Prostate gland (tissue), 2 donors: ENCODE measurements at regions of chr14 and their contacts with region 1.

Region 1: GRCh38 chr14:75293920-75294642 is 15.5 kb downstream of the FOS start:
- DNase-seq: peak; percentile 93
- H3K4me3 ChIP-seq: peak overlapping the region; percentile 37 to 53
- H3K27ac ChIP-seq: peak overlapping the region; percentile 79 to 86
- H3K4me1 ChIP-seq: peaks cover 6% of the 10 kb centered on the region
- H3K27me3 ChIP-seq: no peaks in the 10 kb centered on the region
- CTCF ChIP-seq: peak in 1 of 4 experiments; percentile 27
- POLR2A ChIP-seq: no peak

Region 2: GRCh38 chr14:75182841-75183624 is 111.0 kb before region 1 on chr14:
- intact Hi-C with region 1: loop called (anchors 5 kb)
- DNase-seq: no peak
- H3K4me3 ChIP-seq: no peak overlapping the region
- H3K27ac ChIP-seq: peak overlapping the region in 1 of 2 donors; percentile 13
- H3K4me1 ChIP-seq: no peaks in the 10 kb centered on the region
- H3K27me3 ChIP-seq: no peaks in the 10 kb centered on the region
- CTCF ChIP-seq: no peak
- POLR2A ChIP-seq: no peak

Region 3: DNA sequence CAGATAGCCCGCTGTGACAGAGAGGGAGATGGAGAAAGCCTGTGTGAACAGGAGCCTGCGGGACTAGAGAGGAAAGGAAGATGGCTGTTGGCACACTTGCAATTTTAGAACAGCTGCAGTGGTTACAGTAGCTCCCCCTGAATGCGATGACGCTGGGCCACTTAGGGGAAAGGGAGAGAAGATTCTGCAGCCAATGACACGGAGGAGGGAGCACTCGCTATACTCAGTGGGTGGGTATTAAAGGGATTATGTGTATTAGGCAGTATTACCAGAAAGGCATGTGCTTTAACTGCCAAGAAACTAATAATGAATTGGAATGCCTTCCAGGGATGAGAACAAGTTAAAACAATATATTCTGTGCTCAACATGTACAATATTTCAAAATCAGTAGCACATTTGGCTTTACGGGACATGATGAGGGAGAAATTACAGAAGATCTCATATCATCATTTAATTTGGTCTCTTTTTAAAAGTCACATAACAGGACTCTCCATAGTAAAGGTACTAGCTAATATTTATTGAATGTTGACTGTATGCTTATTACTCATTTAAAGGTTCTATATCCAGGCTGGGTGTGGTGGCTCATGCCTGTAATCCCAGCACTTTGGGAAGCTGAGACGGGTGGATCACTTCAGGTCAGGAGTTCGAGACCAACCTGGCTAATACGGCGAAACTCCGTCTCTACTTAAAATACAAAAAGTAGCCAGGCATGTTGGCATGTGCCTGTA is 51.4 kb before region 1 on chr14:
- intact Hi-C with region 1: loop called (anchors 5 kb)
- DNase-seq: peak; percentile 63
- H3K4me3 ChIP-seq: no peak overlapping the region
- H3K27ac ChIP-seq: peak overlapping the region; percentile 49 to 52
- H3K4me1 ChIP-seq: no peaks in the 10 kb centered on the region
- H3K27me3 ChIP-seq: no peaks in the 10 kb centered on the region
- CTCF ChIP-seq: no peak
- POLR2A ChIP-seq: no peak

Region 4: GRCh38 chr14:75278422-75279161 is 15.5 kb before region 1 on chr14 and contains the start of gene FOS:
- intact Hi-C with region 1: loop called (anchors 1 kb)
- DNase-seq: peak; percentile 92
- H3K4me3 ChIP-seq: peak within 1 kb of the TSS; percentile 44 to 59
- H3K27ac ChIP-seq: peak within 1 kb of the TSS; percentile 96 to 98
- H3K4me1 ChIP-seq: peaks cover 4% of the 10 kb centered on the region
- H3K27me3 ChIP-seq: no peaks in the 10 kb centered on the region
- CTCF ChIP-seq: peak in 2 of 4 experiments; percentile 38 to 50
- POLR2A ChIP-seq: peak; percentile 98
- total RNA-seq, gene FOS: 73.9 to 127 TPM